ENCODE measurements at regions of chr4 and their contacts with region 1.

Region 1: GRCh38 chr4:7206911-7207567 is 14.7 kb downstream of the SORCS2 start:
- DNase-seq: peak; percentile 95
- H3K4me3 ChIP-seq: peak overlapping the region in 2 of 4 donors; percentile 8 to 12
- H3K27ac ChIP-seq: peak overlapping the region; percentile 77 to 88 (median 82)
- H3K4me1 ChIP-seq: peaks cover 0 to 45% (median 35%) of the 10 kb centered on the region in 4 donors
- H3K27me3 ChIP-seq: no peaks in the 10 kb centered on the region
- CTCF ChIP-seq: no peak
- EP300 ChIP-seq: no peak
- POLR2A ChIP-seq: no peak

Region 2: DNA sequence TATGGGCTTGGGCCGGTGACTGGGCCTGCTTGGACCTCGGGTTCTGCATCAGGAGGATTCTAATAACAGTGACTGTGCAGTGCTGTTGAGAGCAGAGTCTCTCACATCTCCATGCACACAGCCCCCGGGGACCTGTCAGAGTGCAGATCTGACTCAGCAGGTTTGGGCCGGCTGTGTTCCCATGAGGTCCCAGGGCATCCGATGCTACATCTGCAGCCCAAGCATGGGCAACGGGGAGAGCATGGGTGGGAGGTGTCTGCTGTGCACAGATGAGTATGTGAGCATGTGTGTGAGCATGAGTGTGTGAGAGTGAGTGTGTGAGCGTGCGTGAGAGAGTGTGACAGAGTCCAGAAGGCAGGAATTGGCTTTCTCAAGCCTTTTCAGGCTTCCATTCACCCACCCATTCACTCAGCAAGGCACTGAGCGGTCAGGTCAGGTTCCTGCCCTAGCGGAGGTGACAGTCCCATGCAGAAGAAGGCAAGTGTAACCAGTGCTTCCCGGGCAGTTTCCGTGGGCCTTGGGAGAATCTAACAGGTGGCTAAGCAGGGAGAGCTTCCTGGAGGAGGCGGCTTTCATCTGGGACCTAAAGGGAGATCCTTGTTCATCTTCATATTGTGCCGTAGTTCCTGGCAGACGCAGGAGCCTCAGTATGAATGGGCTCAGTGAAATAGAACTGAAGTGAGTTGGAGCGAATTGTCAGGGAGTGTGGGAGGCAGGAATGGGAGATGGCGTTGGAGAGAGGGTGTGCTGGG is 47.9 kb after region 1 on chr4:
- intact Hi-C with region 1: loop called (anchors 2 kb)
- DNase-seq: no peak
- H3K4me3 ChIP-seq: no peak overlapping the region
- H3K27ac ChIP-seq: no peak overlapping the region
- H3K4me1 ChIP-seq: peaks cover 0 to 42% (median 31%) of the 10 kb centered on the region in 4 donors
- H3K27me3 ChIP-seq: no peaks in the 10 kb centered on the region
- CTCF ChIP-seq: no peak
- EP300 ChIP-seq: no peak
- POLR2A ChIP-seq: no peak

Region 3: GRCh38 chr4:7708981-7709380 is 501.9 kb after region 1 on chr4:
- intact Hi-C with region 1: no loop called
- DNase-seq: no peak
- H3K4me3 ChIP-seq: no peak overlapping the region
- H3K27ac ChIP-seq: no peak overlapping the region
- H3K4me1 ChIP-seq: no peaks in the 10 kb centered on the region
- H3K27me3 ChIP-seq: no peaks in the 10 kb centered on the region
- CTCF ChIP-seq: no peak
- EP300 ChIP-seq: no peak
- POLR2A ChIP-seq: no peak

Measured in sigmoid colon (tissue), 7 donors.